Caco-2 (cell line): ENCODE measurements at regions of chr2 and their contacts with region 1.

Region 1: GRCh38 chr2:1750933-1751766 is 6.8 kb upstream of the PXDN start:
- DNase-seq: peak; percentile 55 to 67
- H3K4me3 ChIP-seq: no peak overlapping the region
- H3K4me3 Mint-ChIP-seq: no peak overlapping the region
- H3K27ac Mint-ChIP-seq: no peak overlapping the region
- H3K4me1 ChIP-seq: no peaks in the 10 kb centered on the region
- H3K4me1 Mint-ChIP-seq: no peaks in the 10 kb centered on the region
- H3K27me3 ChIP-seq: no peaks in the 10 kb centered on the region
- H3K27me3 Mint-ChIP-seq: peaks cover 6% of the 10 kb centered on the region
- CTCF ChIP-seq: peak; percentile 78 to 81

Region 2: GRCh38 chr2:1591978-1592907 is 158.9 kb before region 1 on chr2:
- CTCF ChIA-PET with region 1: interaction called, 7 read pairs
- POLR2A ChIA-PET with region 1: no interaction called
- intact Hi-C with region 1: loop called (anchors 5 kb)
- DNase-seq: peak in 1 of 2 experiments; percentile 34
- H3K4me3 ChIP-seq: no peak overlapping the region
- H3K4me3 Mint-ChIP-seq: no peak overlapping the region
- H3K27ac Mint-ChIP-seq: no peak overlapping the region
- H3K4me1 ChIP-seq: no peaks in the 10 kb centered on the region
- H3K4me1 Mint-ChIP-seq: no peaks in the 10 kb centered on the region
- H3K27me3 ChIP-seq: no peaks in the 10 kb centered on the region
- H3K27me3 Mint-ChIP-seq: no peaks in the 10 kb centered on the region
- CTCF ChIP-seq: peak in 1 of 2 experiments; percentile 6

Region 3: DNA sequence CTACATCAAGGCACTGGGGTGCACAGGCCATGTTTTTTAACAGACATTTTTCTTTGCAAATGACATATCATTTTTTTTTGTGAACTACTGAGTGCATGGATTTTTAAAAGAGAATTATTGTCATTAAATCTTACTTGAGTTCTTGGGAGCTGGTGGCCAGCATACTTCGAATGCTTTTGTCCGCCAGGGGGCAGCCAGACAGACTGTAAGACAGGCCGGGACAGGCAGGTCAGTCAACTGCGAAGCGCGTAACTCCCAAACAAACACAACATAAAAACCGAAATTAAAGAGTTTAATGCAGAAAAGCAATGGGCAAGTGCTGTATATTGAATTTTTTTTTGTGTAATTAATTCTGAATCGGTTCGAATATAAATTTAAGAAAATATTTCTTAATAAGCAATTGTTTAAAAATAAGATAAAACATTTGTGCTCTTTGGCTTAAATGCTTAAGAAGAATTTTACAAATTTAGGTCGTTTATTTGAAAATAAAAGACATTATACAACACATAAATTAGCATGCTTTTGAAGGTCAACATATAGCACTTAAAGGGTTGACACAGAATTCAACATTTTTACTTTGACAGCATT is 135.3 kb after region 1 on chr2:
- CTCF ChIA-PET with region 1: no interaction called
- POLR2A ChIA-PET with region 1: no interaction called
- intact Hi-C with region 1: no loop called
- DNase-seq: peak; percentile 57 to 69
- H3K4me3 ChIP-seq: no peak overlapping the region
- H3K4me3 Mint-ChIP-seq: no peak overlapping the region
- H3K27ac Mint-ChIP-seq: no peak overlapping the region
- H3K4me1 ChIP-seq: no peaks in the 10 kb centered on the region
- H3K4me1 Mint-ChIP-seq: no peaks in the 10 kb centered on the region
- H3K27me3 ChIP-seq: no peaks in the 10 kb centered on the region
- H3K27me3 Mint-ChIP-seq: peaks cover 16% of the 10 kb centered on the region
- CTCF ChIP-seq: peak; percentile 71 to 81